Upper lobe of right lung (tissue), 1 donor: ENCODE measurements at regions of chr10 and their contacts with region 1.

Region 1: DNA sequence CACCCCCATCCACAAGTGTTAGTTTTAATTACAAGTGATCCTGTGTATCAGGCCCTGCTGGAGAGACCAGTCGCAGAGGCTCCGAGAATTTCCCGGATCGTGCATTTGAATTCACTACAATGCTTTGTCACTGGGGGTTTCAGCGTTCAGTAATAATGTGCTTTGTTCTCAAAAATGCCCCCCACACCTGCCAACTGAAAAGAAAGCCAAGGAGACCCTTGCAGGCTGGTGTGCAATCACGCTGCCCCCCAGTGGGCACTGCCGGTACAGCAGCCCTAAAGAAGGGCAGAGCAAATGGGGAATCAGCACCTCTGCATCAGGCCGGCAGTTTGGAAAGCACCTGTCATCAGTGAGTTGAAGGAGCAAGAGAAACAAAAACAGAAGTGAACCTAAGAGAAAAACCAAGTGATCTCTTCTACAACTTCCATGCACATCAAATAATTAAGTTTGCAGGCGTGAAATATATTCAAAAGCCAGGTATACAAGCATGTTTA is 177.6 kb downstream of the PARD3 start:
- DNase-seq: peak; percentile 78
- ATAC-seq: peak; percentile 82
- H3K4me3 ChIP-seq: no peak overlapping the region
- H3K27ac ChIP-seq: peak overlapping the region; percentile 6
- H3K4me1 ChIP-seq: peaks cover 20% of the 10 kb centered on the region
- H3K27me3 ChIP-seq: no peaks in the 10 kb centered on the region
- CTCF ChIP-seq: peak; percentile 96

Region 2: DNA sequence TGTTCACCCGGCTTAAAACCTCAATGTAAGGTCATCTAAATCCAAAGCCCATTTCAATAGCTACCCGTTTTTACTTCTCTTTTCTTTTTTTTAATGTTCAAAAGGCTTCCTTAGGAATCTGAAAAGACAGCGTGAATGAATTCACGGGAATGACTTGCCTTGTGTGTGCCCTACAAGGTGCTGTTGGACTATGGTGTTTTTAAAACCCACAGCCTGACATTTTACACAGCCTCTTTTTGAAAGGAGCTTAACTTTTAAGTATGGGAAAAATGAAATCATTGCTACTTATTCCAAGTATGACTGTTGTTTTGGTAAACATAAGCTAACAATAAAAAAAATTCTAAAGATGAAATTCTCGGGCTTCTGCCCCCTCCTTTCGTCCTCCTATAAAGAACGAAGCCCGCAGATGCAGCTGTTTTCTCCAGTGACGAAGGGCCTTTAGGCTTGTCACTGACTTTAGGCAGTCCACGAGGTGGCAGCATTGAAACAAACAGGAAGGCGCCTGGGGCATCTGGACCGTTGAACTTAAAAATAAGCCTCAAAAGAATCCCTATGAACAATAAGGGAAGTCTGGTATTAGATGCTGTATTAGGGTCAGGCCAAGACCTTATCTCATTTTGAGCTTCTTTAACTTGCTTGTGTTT is 1444.3 kb before region 1 on chr10:
- intact Hi-C with region 1: loop called (anchors 10 kb)
- DNase-seq: peak; percentile 75
- ATAC-seq: peak; percentile 90
- H3K4me3 ChIP-seq: no peak overlapping the region
- H3K27ac ChIP-seq: peak overlapping the region; percentile 39
- H3K4me1 ChIP-seq: peaks cover 40% of the 10 kb centered on the region
- H3K27me3 ChIP-seq: no peaks in the 10 kb centered on the region
- CTCF ChIP-seq: peak; percentile 85

Region 3: GRCh38 chr10:33330543-33331378 is 1306.7 kb before region 1 on chr10:
- intact Hi-C with region 1: loop called (anchors 10 kb)
- DNase-seq: peak; percentile 87
- ATAC-seq: peak; percentile 76
- H3K4me3 ChIP-seq: peak overlapping the region; percentile 85
- H3K27ac ChIP-seq: peak overlapping the region; percentile 49
- H3K4me1 ChIP-seq: peaks cover 39% of the 10 kb centered on the region
- H3K27me3 ChIP-seq: no peaks in the 10 kb centered on the region
- CTCF ChIP-seq: peak; percentile 95

Region 4: DNA sequence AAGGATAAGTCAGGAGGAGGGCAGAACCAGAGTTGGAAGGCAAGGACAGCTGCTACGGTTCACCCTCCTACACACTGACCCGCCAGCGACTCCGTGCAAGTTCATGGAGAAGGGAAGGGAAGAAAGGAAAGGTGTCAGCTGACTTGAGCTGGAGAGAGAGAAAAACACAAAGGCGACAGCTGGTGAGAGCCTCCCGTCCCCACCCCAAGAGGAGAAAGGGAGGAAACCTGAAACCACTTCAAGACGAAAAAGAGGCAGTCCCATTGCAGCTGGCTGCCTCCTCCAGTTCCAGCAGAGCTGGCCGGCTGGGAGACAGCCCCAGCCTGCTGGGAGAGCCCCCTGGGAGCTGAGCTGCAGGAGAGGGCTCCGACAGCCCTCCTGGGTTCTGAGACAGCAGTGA is 102.5 kb after region 1 on chr10:
- intact Hi-C with region 1: no loop called
- DNase-seq: peak; percentile 68
- ATAC-seq: peak; percentile 90
- H3K4me3 ChIP-seq: peak overlapping the region; percentile 5
- H3K27ac ChIP-seq: peak overlapping the region; percentile 20
- H3K4me1 ChIP-seq: peaks cover 6% of the 10 kb centered on the region
- H3K27me3 ChIP-seq: no peaks in the 10 kb centered on the region
- CTCF ChIP-seq: no peak